ENCODE measurements at regions of chr5 and their contacts with region 1.

Region 1: DNA sequence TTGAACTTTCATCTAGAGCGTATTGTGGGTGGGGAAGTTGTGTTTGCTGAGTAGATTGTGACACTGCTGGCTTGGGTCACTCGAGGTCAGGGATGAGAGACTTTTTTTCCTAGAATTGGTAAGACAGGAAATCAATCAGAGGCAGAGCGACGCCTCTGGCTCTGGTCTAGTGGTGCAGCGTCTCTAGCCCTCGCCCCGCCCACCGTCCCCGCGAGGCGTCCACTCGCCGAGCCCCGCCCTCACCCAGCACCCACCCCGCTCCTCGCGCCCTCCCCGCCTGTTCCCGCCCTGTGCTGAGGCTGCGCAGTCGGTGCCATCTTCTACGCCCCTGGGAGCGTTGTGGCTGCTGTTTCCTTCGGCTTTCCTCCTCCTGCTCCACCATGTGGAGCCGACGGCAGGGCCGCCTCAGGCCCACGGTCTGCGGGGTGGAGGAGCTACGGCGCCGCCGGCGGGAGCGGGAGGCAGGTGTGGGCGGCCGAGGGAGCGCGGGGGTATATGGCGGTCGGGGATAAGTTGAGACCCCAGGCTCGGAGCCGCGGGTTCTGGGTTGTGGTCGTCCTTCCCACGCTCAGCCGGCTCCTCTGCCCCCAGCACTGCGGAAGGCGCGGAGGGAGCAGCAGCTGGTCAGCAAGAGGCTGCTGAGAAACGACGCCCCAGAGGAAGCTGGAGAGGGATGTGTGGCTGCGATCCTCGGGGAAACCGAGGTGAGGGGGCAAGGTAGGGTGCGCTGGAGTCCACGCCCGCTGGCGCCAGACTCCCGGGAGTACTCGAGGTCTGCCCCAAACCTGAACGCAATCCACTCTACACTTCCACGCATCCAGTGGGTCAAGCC is at the start of gene TMCO6:
- DNase-seq: peak; percentile 91
- H3K4me3 Mint-ChIP-seq: peak within 1 kb of the TSS; percentile 93
- H3K27ac Mint-ChIP-seq: peak within 1 kb of the TSS; percentile 97
- H3K4me1 Mint-ChIP-seq: peaks cover 31% of the 10 kb centered on the region
- H3K27me3 Mint-ChIP-seq: peaks cover 2% of the 10 kb centered on the region
- total RNA-seq, gene TMCO6: 43.2 and 43.6 TPM in 2 replicates

Region 2: GRCh38 chr5:140113699-140114263 is 525.6 kb before region 1 on chr5 and contains the start of gene PURA:
- intact Hi-C with region 1: loop called (anchors 10 kb)
- DNase-seq: peak; percentile 94
- H3K4me3 Mint-ChIP-seq: peak within 1 kb of the TSS; percentile 94
- H3K27ac Mint-ChIP-seq: peak within 1 kb of the TSS; percentile 96
- H3K4me1 Mint-ChIP-seq: peaks cover 60% of the 10 kb centered on the region
- H3K27me3 Mint-ChIP-seq: peaks cover 40% of the 10 kb centered on the region
- total RNA-seq, gene PURA: 10.6 and 12.2 TPM in 2 replicates

Region 3: GRCh38 chr5:140362860-140363630 is 276.3 kb before region 1 on chr5:
- intact Hi-C with region 1: loop called (anchors 1 kb)
- DNase-seq: peak; percentile 79
- H3K4me3 Mint-ChIP-seq: peak overlapping the region; percentile 79
- H3K27ac Mint-ChIP-seq: peak overlapping the region; percentile 73
- H3K4me1 Mint-ChIP-seq: peaks cover 6% of the 10 kb centered on the region
- H3K27me3 Mint-ChIP-seq: peaks cover 2% of the 10 kb centered on the region

Region 4: DNA sequence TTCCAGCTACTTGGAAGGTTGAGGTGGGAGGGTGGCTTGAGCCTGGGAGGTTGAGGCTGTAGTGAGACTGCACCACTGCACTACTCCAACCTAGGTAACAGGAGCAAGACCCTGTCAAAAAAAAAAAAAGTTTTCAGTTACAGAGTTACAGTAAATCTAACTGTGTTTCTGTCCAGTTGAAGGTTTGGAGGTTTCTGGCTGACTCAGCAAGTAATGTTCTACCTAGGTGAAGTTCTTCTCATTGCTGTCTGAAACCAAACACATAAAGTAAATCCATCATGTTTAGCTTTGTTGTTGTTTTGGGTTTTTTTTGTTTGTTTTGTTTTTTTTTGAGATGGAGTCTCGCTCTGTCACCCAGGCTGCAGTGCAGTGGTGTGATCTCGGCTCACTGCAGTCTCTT is 245.6 kb before region 1 on chr5:
- intact Hi-C with region 1: no loop called
- DNase-seq: no peak
- H3K4me3 Mint-ChIP-seq: no peak overlapping the region
- H3K27ac Mint-ChIP-seq: no peak overlapping the region
- H3K4me1 Mint-ChIP-seq: no peaks in the 10 kb centered on the region
- H3K27me3 Mint-ChIP-seq: no peaks in the 10 kb centered on the region

Region 5: GRCh38 chr5:140420226-140420570 is 219.2 kb before region 1 on chr5:
- intact Hi-C with region 1: loop called (anchors 5 kb)
- DNase-seq: no peak
- H3K4me3 Mint-ChIP-seq: no peak overlapping the region
- H3K27ac Mint-ChIP-seq: no peak overlapping the region
- H3K4me1 Mint-ChIP-seq: peaks cover 40% of the 10 kb centered on the region
- H3K27me3 Mint-ChIP-seq: no peaks in the 10 kb centered on the region

Region 6: DNA sequence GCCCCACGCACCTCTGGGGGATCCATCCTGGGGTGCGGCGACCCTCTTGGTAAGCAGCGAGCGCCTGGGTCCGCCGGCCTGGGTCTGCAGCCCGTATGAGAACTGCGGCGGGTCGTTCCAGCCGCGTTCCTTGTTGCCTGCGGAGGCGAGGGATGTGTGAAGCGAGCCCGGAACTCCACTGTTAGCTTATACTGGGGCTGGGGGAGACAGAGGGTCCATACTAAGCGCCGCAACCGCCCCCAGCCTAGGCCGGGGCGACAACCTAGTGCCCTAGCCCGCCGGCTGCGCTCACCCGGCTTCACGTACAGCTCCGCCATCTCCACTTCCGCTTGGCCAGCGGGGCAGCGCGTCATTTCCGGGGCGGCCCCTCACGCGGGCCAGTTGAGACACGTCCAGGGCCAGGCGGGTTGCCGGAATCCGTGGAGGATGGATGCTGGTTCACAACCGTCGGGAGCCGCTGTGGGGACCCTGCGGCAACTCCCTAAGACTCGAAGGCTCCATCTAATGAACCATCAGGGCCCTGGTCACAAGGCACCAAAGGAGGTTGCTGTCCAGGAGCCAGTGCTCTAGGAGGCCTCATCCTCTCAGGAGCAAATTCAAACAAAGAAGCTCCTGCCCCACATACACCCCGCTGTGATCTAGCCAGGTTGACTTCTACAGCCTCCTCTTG is 82.1 kb before region 1 on chr5 and contains the start of gene SRA1:
- intact Hi-C with region 1: loop called (anchors 1 kb)
- DNase-seq: peak; percentile 90
- H3K4me3 Mint-ChIP-seq: peak within 1 kb of the TSS; percentile 88
- H3K27ac Mint-ChIP-seq: peak within 1 kb of the TSS; percentile 89
- H3K4me1 Mint-ChIP-seq: peaks cover 47% of the 10 kb centered on the region
- H3K27me3 Mint-ChIP-seq: no peaks in the 10 kb centered on the region
- total RNA-seq, gene SRA1: 55.6 and 59.2 TPM in 2 replicates

Region 7: DNA sequence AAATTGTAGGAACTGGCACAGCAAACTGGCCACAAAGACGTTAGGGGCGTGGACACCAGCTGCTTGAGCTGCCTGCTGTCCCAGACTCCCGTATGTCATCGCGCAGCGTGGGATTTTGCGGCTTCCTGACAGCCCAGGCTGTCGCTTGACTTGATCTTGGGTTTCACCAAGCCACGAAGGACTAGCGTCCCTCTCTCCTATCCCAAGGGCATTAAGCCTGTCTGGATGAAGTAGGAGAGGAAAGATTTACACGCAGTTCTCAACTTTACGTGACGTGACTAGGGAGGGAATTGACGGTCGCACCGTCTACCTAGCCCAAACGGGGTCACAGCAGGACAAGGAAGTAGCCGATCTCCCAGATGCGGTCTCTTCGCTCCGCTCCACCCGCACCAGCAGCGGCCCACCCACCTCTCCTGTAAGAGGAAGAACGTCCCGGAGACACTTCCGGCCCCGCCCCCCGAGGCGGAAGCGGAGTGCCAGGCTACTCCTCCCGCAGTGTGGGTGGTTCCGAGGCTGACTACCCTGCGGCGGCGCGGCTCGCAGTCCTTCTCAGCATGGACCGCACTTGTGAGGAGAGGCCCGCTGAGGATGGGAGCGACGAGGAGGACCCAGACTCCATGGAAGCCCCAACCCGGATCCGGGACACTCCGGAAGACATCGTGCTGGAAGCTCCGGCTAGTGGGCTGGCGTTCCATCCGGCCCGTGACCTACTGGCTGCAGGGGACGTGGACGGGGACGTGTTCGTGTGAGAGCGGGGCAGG is 25.2 kb after region 1 on chr5 and contains the start of gene WDR55:
- intact Hi-C with region 1: loop called (anchors 1 kb)
- DNase-seq: peak; percentile 94
- H3K4me3 Mint-ChIP-seq: peak within 1 kb of the TSS; percentile 100
- H3K27ac Mint-ChIP-seq: peak within 1 kb of the TSS; percentile 93
- H3K4me1 Mint-ChIP-seq: peaks cover 28% of the 10 kb centered on the region
- H3K27me3 Mint-ChIP-seq: no peaks in the 10 kb centered on the region
- total RNA-seq, gene WDR55: 42.7 and 43.2 TPM in 2 replicates

Region 8: GRCh38 chr5:140710899-140711552 is 71.7 kb after region 1 on chr5:
- intact Hi-C with region 1: loop called (anchors 1 kb)
- DNase-seq: peak; percentile 87
- H3K4me3 Mint-ChIP-seq: peak overlapping the region; percentile 91
- H3K27ac Mint-ChIP-seq: peak overlapping the region; percentile 94
- H3K4me1 Mint-ChIP-seq: peaks cover 22% of the 10 kb centered on the region
- H3K27me3 Mint-ChIP-seq: peaks cover 8% of the 10 kb centered on the region

Measured in activated T-helper 1 cell treated with anti-CD3 and anti-CD28 coated beads, Interleukin-12 subunit alpha, Interleukin-12 subunit beta, Interleukin-2, Interleukin-4 antibody, amounts not matched to agents 30 ng/mL and 10 ng/mL and 1 ng/mL, durations not matched to agents 14 hours and 24 hours and 36 hours (primary cell).